PC-9 (cell line): ENCODE measurements at regions of chr6 and their contacts with region 1.

Region 1: GRCh38 chr6:133447924-133448323 is 206.8 kb downstream of the EYA4 start:
- DNase-seq: no peak
- H3K4me3 ChIP-seq: no peak overlapping the region
- H3K27ac ChIP-seq: no peak overlapping the region
- H3K4me1 ChIP-seq: no peaks in the 10 kb centered on the region
- H3K27me3 ChIP-seq: no peaks in the 10 kb centered on the region
- CTCF ChIP-seq: no peak

Region 2: GRCh38 chr6:132843316-132844043 is 604.4 kb before region 1 on chr6:
- CTCF ChIA-PET with region 1: no interaction called
- POLR2A ChIA-PET with region 1: no interaction called
- intact Hi-C with region 1: no loop called
- DNase-seq: no peak
- H3K4me3 ChIP-seq: no peak overlapping the region
- H3K27ac ChIP-seq: no peak overlapping the region
- H3K4me1 ChIP-seq: no peaks in the 10 kb centered on the region
- H3K27me3 ChIP-seq: no peaks in the 10 kb centered on the region
- CTCF ChIP-seq: no peak

Region 3: DNA sequence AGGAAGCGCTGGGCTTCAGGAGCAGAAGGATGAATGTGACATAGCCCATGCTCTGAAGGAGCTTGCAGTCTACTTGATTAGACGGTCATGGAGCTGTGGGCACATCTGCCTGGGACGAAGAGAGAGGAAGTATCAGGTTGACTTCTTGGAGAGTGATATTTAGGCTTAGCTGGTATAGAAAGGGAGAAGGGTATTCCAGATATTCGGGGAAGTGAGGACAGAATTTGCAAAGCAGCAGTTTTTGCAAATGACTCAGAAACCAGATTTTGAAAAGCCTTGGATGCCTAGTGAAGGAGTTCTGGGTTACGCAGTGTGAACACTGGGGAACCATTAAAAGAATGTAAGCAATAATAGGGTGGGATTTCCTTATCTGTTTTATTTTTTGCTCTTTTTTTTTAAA is 146.1 kb before region 1 on chr6:
- CTCF ChIA-PET with region 1: no interaction called
- POLR2A ChIA-PET with region 1: no interaction called
- intact Hi-C with region 1: no loop called
- DNase-seq: no peak
- H3K4me3 ChIP-seq: no peak overlapping the region
- H3K27ac ChIP-seq: no peak overlapping the region
- H3K4me1 ChIP-seq: no peaks in the 10 kb centered on the region
- H3K27me3 ChIP-seq: no peaks in the 10 kb centered on the region
- CTCF ChIP-seq: no peak

Region 4: DNA sequence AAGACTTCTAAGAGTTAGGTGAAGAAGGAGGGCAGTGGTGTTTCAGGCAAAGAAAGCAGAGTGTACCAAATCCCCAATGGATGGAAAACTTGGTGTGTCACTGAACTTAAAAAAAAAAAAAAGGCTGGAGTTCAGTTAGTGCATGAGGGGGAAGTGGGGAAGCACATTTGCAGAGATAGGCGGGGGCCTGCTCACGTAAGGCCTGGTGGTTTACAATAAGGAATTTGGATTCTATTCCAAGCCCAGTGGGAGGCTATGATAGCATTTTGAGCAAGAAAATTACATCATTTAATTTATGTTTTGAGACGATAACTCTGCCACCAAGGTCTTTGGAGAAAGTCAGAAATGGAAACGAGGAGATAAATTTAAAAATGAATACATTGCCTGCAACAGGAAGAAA is 18.7 kb after region 1 on chr6:
- CTCF ChIA-PET with region 1: no interaction called
- POLR2A ChIA-PET with region 1: no interaction called
- intact Hi-C with region 1: no loop called
- DNase-seq: no peak
- H3K4me3 ChIP-seq: no peak overlapping the region
- H3K27ac ChIP-seq: no peak overlapping the region
- H3K4me1 ChIP-seq: no peaks in the 10 kb centered on the region; the same call in 1 of the 2 replicates
- H3K27me3 ChIP-seq: no peaks in the 10 kb centered on the region
- CTCF ChIP-seq: no peak

Region 5: GRCh38 chr6:134331256-134331655 is 883.3 kb after region 1 on chr6:
- CTCF ChIA-PET with region 1: no interaction called
- POLR2A ChIA-PET with region 1: interaction called, 26 read pairs
- intact Hi-C with region 1: no loop called
- DNase-seq: no peak
- H3K4me3 ChIP-seq: no peak overlapping the region
- H3K27ac ChIP-seq: no peak overlapping the region
- H3K4me1 ChIP-seq: no peaks in the 10 kb centered on the region
- H3K27me3 ChIP-seq: no peaks in the 10 kb centered on the region
- CTCF ChIP-seq: no peak